Aorta (tissue), 5 donors: ENCODE measurements at regions of chr10 and their contacts with region 1.

Region 1: GRCh38 chr10:70925377-70926225 is 37.2 kb upstream of the PCBD1 start:
- DNase-seq: peak; percentile 61 to 89
- ATAC-seq: peak; percentile 83
- H3K4me3 ChIP-seq: no peak overlapping the region
- H3K27ac ChIP-seq: no peak overlapping the region
- H3K4me1 ChIP-seq: no peaks in the 10 kb centered on the region
- H3K27me3 ChIP-seq: no peaks in the 10 kb centered on the region

Region 2: DNA sequence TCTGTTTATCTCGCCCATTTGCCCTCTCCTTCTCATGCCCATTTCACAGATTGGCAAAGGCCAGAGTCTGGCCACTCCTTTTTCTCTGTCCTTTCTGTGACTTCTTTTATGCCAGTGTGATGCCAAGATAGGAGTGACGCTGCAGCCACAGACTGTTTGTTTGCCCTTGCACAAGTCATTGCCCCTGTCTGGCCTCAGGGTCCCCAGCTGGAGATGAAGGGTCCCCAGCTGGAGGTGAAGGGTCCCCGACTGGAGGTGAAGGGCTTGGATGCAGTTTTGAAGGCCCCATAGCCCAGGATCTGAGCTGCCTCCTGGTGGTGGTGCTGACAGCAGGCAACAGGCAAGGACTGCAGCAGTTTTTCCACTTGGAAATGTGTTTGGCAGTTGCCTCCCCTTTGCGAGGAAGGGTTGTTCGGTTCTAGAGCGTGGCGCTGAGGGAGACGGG is 342.7 kb after region 1 on chr10:
- intact Hi-C with region 1: loop called in 1 of 2 experiments (anchors 5 kb)
- DNase-seq: no peak
- ATAC-seq: no peak
- H3K4me3 ChIP-seq: no peak overlapping the region
- H3K27ac ChIP-seq: no peak overlapping the region
- H3K4me1 ChIP-seq: no peaks in the 10 kb centered on the region
- H3K27me3 ChIP-seq: no peaks in the 10 kb centered on the region

Region 3: DNA sequence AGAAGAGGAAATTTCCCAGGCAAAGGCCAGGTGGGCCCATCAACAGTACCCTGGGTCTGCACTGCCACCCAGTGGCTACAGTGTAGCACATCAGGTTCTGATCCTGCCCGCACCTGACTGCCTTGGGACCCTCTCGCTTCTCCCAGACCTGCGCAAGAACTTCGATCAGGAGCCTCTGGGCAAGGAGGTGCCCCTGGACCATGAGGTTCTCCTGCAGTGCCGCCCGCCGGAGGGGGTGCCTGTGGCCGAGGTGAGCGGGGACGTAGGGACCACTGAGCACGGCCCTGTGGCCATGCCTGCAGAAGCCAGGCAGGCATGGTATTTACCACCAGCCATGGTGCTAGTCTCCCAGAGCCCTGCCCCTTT is 359.6 kb after region 1 on chr10:
- intact Hi-C with region 1: loop called (anchors 2 kb)
- DNase-seq: no peak
- ATAC-seq: peak; percentile 36
- H3K4me3 ChIP-seq: no peak overlapping the region
- H3K27ac ChIP-seq: no peak overlapping the region
- H3K4me1 ChIP-seq: no peaks in the 10 kb centered on the region
- H3K27me3 ChIP-seq: no peaks in the 10 kb centered on the region